Heart left ventricle (tissue), 16 donors: ENCODE measurements at regions of chr2 and their contacts with region 1.

Region 1: GRCh38 chr2:158903711-158904443 is 64.6 kb upstream of the TANC1 start:
- DNase-seq: no peak
- ATAC-seq: no peak
- H3K4me3 ChIP-seq: no peak overlapping the region
- H3K27ac ChIP-seq: no peak overlapping the region
- H3K4me1 ChIP-seq: peaks cover 0 to 4% (median 0%) of the 10 kb centered on the region in 12 donors
- H3K27me3 ChIP-seq: no peaks in the 10 kb centered on the region
- CTCF ChIP-seq: no peak
- POLR2A ChIP-seq: no peak

Region 2: DNA sequence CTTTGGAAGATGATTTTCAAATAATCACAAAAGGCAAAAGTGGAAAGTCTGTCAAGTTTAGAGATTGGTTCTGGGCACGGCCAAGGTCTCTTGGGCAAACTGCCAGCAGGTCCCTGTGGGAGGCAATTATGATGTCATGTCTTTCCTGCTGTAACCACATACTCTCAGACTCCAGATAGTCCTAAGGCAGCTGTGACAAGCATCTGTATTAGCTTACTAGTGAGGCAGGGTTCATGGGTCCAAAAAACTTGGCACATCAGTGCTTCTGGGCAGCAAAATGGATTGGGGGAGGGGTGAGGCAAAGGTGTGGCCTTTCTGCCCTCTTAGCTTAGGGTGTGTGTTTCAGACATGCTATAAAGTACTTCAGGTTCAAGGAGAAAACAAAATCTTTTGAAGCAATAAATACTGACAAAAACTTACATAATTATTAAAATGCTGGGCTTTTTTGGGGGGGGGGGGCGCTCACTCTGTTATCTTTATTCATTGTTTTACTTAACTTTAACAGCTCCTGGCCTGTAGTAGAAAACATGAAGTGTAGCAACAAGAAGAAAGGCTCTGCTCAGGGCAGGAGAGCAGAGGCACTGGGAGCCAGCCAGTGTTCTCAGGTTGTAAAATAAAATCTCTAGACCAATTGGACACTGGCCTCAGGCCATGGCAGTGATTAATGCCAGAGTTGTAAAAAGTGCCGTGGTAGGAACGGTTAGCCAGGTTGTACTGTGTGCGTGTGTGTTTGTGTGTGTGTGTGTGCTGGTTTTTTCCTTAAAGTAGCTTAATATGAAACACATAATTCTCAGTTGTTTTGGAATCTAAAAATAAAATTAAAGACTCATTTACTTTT is 50.3 kb after region 1 on chr2:
- intact Hi-C with region 1: loop called in 1 of 10 experiments (anchors 5 kb)
- DNase-seq: peak; percentile 77 to 82 (median 80)
- ATAC-seq: peak; percentile 82 to 93 (median 90)
- H3K4me3 ChIP-seq: no peak overlapping the region
- H3K27ac ChIP-seq: peak overlapping the region in 11 of 12 donors; percentile 7 to 72 (median 60)
- H3K4me1 ChIP-seq: peaks cover 7 to 25% (median 17%) of the 10 kb centered on the region in 12 donors
- H3K27me3 ChIP-seq: no peaks in the 10 kb centered on the region
- CTCF ChIP-seq: no peak
- POLR2A ChIP-seq: no peak

Region 3: GRCh38 chr2:158968396-158969161 is 64.7 kb after region 1 on chr2 and contains the start of gene TANC1:
- intact Hi-C with region 1: loop called in 8 of 10 experiments (anchors 5 to 10 kb)
- DNase-seq: peak; percentile 95 to 97 (median 96)
- ATAC-seq: peak; percentile 88 to 97 (median 94)
- H3K4me3 ChIP-seq: peak within 1 kb of the TSS; percentile 64 to 93 (median 86)
- H3K27ac ChIP-seq: peak within 1 kb of the TSS; percentile 90 to 97 (median 94)
- H3K4me1 ChIP-seq: peaks cover 0 to 64% (median 37%) of the 10 kb centered on the region in 12 donors
- H3K27me3 ChIP-seq: peaks cover 0 to 12% (median 0%) of the 10 kb centered on the region in 9 donors
- CTCF ChIP-seq: no peak
- POLR2A ChIP-seq: peak; percentile 57 to 98
- total RNA-seq, gene TANC1: 41.2 to 91.1 (median 74.0) TPM

Region 4: GRCh38 chr2:159030674-159031380 is 127.0 kb after region 1 on chr2:
- intact Hi-C with region 1: loop called in 2 of 10 experiments (anchors 5 to 10 kb)
- DNase-seq: peak; percentile 63 to 80 (median 71)
- ATAC-seq: peak; percentile 59 to 89 (median 85)
- H3K4me3 ChIP-seq: no peak overlapping the region
- H3K27ac ChIP-seq: peak overlapping the region; percentile 67 to 92 (median 82)
- H3K4me1 ChIP-seq: peaks cover 9 to 78% (median 54%) of the 10 kb centered on the region in 12 donors
- H3K27me3 ChIP-seq: no peaks in the 10 kb centered on the region
- CTCF ChIP-seq: no peak
- POLR2A ChIP-seq: no peak

Region 5: GRCh38 chr2:159035790-159036411 is 132.0 kb after region 1 on chr2:
- intact Hi-C with region 1: loop called in 2 of 10 experiments (anchors 5 to 10 kb)
- DNase-seq: no peak
- ATAC-seq: peak; percentile 39 to 77 (median 72)
- H3K4me3 ChIP-seq: no peak overlapping the region
- H3K27ac ChIP-seq: peak overlapping the region in 9 of 12 donors; percentile 13 to 58 (median 41)
- H3K4me1 ChIP-seq: peaks cover 0 to 51% (median 38%) of the 10 kb centered on the region in 12 donors
- H3K27me3 ChIP-seq: no peaks in the 10 kb centered on the region
- CTCF ChIP-seq: peak in 9 of 12 donors; percentile 10 to 55 (median 33)
- POLR2A ChIP-seq: no peak

Region 6: GRCh38 chr2:159118115-159118858 is 214.4 kb after region 1 on chr2:
- intact Hi-C with region 1: loop called (anchors 1 to 2 kb)
- DNase-seq: peak; percentile 86 to 90 (median 87)
- ATAC-seq: peak; percentile 80 to 86 (median 84)
- H3K4me3 ChIP-seq: no peak overlapping the region
- H3K27ac ChIP-seq: peak overlapping the region in 11 of 12 donors; percentile 43 to 94 (median 70)
- H3K4me1 ChIP-seq: peaks cover 3 to 67% (median 18%) of the 10 kb centered on the region in 12 donors
- H3K27me3 ChIP-seq: no peaks in the 10 kb centered on the region
- CTCF ChIP-seq: peak; percentile 84 to 96 (median 91)
- POLR2A ChIP-seq: no peak

Region 7: GRCh38 chr2:159185401-159186130 is 281.7 kb after region 1 on chr2:
- intact Hi-C with region 1: loop called in 4 of 10 experiments (anchors 5 to 10 kb)
- DNase-seq: no peak
- ATAC-seq: peak; percentile 18 to 66 (median 52)
- H3K4me3 ChIP-seq: no peak overlapping the region
- H3K27ac ChIP-seq: peak overlapping the region in 5 of 12 donors; percentile 22 to 52 (median 45)
- H3K4me1 ChIP-seq: peaks cover 3 to 50% (median 25%) of the 10 kb centered on the region in 12 donors
- H3K27me3 ChIP-seq: no peaks in the 10 kb centered on the region
- CTCF ChIP-seq: peak in 11 of 12 donors; percentile 21 to 58 (median 41)
- POLR2A ChIP-seq: no peak

Region 8: DNA sequence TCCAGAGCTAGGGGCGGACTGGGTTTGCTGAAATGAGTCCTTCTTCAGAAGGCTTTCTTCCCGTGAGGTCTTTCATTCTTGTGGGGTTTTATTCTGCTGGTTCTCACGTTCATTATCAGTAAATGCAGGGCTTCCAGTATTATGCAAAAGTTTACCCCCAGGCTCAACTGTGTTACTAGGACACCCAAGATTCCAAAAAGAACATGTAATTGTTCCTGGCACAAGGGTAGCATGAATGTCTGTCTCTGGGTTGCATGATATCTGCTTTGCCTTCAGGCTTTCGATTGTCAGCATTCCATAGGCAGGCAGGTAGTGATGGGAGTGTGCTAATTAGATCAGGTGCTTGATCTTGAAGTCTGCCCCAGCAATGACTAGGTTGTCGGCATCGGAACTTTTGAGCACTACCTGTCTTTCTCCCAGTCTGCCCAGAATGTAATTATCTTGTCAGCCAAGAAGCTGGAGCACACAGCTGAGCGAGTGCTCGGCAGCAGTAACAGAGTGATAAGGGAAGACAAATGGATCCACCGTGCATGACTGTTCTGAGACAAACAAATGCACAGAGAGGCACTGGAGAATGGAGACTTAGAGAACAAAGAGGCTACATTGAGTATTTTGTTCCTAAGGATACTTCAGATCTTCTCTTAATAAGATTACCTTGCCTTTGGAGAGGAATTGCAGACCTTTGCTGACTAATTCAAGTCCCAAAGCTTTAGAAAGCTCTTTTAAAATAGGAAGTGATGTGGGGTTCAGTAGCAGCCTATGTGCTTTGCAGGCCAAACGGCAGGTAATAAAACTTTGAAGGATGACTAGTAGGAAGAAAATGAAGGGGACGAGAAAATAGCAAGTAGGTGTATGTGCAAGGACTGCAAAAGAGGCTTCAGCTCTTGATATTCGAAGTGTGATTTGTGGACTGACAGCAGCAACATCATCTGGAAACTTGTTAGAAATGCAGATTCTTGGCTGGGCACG is 1254.3 kb after region 1 on chr2:
- intact Hi-C with region 1: no loop called
- DNase-seq: no peak
- ATAC-seq: peak; percentile 31 to 64 (median 44)
- H3K4me3 ChIP-seq: peak overlapping the region in 2 of 12 donors; percentile 0 to 24
- H3K27ac ChIP-seq: no peak overlapping the region
- H3K4me1 ChIP-seq: peaks cover 0 to 17% (median 2%) of the 10 kb centered on the region in 12 donors
- H3K27me3 ChIP-seq: no peaks in the 10 kb centered on the region
- CTCF ChIP-seq: no peak
- POLR2A ChIP-seq: no peak